ENCODE measurements at regions of chr5 and their contacts with region 1.

Region 1: DNA sequence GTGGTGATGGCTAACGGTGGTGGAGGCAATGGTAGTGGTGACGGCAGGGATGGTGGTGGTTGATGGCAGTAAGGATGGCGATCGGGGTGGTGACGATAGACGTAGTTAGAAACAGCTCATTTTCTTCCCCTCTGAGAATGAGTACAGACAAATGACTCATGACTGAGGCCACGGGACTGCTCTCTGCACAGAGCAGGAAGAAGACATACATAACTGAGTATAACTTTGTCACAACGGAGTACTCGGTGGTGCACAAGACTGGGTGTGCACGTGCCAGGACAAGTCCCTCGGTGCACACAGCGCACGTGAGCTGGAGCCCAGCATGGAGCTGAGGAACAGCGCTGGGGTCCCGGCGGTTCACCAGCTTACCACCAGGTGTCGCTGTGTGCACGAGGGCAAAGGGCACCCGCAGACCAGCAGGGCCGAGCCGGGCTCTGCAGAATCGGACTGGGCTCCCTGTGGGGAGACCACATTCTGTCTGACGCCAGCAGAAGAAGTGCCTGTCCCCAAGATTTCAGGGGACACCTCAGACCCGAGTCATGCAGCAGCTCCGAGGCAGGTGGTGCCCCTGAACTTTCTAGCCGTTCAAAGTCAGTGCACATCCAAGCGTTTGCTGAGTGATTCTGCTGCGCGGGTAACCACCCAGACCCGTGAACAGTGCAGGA is 188.6 kb downstream of the FSTL4 start:
- DNase-seq: peak; percentile 87

Region 2: GRCh38 chr5:132943362-132944022 is 480.3 kb before region 1 on chr5:
- intact Hi-C with region 1: no loop called
- DNase-seq: no peak

Region 3: GRCh38 chr5:133232011-133232410 is 191.7 kb before region 1 on chr5:
- intact Hi-C with region 1: no loop called
- DNase-seq: no peak

Region 4: GRCh38 chr5:133610489-133611356 is 187.0 kb after region 1 on chr5:
- intact Hi-C with region 1: loop called (anchors 1 kb)
- DNase-seq: no peak

Region 5: GRCh38 chr5:133942614-133943474 is 519.1 kb after region 1 on chr5:
- intact Hi-C with region 1: loop called (anchors 2 kb)
- DNase-seq: peak; percentile 29

Region 6: GRCh38 chr5:134714120-134714519 is 1290.4 kb after region 1 on chr5:
- intact Hi-C with region 1: no loop called
- DNase-seq: no peak